Caco-2 (cell line): ENCODE measurements at regions of chr6 and their contacts with region 1.

Region 1: GRCh38 chr6:45835721-45836438 is 179.8 kb downstream of the CLIC5 start:
- DNase-seq: no peak
- H3K4me3 ChIP-seq: no peak overlapping the region
- H3K4me3 Mint-ChIP-seq: no peak overlapping the region
- H3K27ac Mint-ChIP-seq: peak overlapping the region; percentile 23
- H3K4me1 ChIP-seq: no peaks in the 10 kb centered on the region
- H3K4me1 Mint-ChIP-seq: peaks cover 6% of the 10 kb centered on the region
- H3K27me3 ChIP-seq: no peaks in the 10 kb centered on the region
- H3K27me3 Mint-ChIP-seq: no peaks in the 10 kb centered on the region
- CTCF ChIP-seq: no peak

Region 2: GRCh38 chr6:45916692-45917091 is 80.8 kb after region 1 on chr6:
- CTCF ChIA-PET with region 1: no interaction called
- POLR2A ChIA-PET with region 1: no interaction called
- intact Hi-C with region 1: loop called (anchors 5 kb)
- DNase-seq: no peak
- H3K4me3 ChIP-seq: no peak overlapping the region
- H3K4me3 Mint-ChIP-seq: no peak overlapping the region
- H3K27ac Mint-ChIP-seq: no peak overlapping the region
- H3K4me1 ChIP-seq: no peaks in the 10 kb centered on the region
- H3K4me1 Mint-ChIP-seq: no peaks in the 10 kb centered on the region
- H3K27me3 ChIP-seq: no peaks in the 10 kb centered on the region
- H3K27me3 Mint-ChIP-seq: no peaks in the 10 kb centered on the region
- CTCF ChIP-seq: no peak